ENCODE measurements at regions of chr11 and their contacts with region 1.

Region 1: DNA sequence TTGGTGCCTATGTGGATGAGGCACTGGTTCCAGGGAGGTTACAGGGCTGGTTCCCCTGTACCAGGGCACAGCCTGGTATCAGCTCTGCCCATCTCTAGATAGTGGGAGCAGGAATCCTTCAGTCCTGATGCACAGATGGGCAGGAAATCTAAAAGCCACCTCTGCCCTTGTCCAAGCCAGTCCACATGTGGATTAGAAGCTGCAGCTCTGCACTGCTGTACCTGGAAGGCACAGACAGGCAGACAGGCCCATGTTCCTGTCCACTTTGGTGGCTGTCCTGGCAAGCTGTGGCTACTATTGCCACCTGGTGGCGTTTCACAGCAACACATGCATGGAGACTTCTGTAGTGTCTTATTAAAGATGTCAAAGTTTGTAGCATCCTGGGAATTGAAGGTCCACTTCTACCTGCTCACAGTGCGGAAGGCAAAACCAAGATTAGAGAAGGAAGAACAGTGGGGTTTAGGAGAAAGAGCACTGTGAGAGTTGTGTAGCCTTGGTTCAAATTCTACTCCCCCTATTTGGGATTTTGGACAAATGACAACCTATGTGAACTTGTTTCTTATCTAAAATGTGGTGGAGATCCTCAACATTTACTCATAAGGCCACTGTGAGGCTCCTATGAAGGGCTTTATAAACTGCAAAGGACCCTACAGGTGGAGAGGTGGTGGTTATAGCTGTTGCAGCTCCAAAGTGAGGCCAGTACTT is 30.1 kb downstream of the NAV2 start:
- DNase-seq: peak; percentile 53 to 83 (median 77)
- ATAC-seq: peak; percentile 95
- H3K4me3 ChIP-seq: no peak overlapping the region
- H3K27ac ChIP-seq: no peak overlapping the region
- H3K4me1 ChIP-seq: peaks cover 0 to 6% of the 10 kb centered on the region in 2 donors
- H3K27me3 ChIP-seq: no peaks in the 10 kb centered on the region
- CTCF ChIP-seq: peak; percentile 82 to 92

Region 2: GRCh38 chr11:19573666-19574065 is 169.1 kb before region 1 on chr11:
- intact Hi-C with region 1: loop called in 1 of 2 experiments (anchors 5 kb)
- DNase-seq: no peak
- ATAC-seq: peak; percentile 20
- H3K4me3 ChIP-seq: no peak overlapping the region
- H3K27ac ChIP-seq: no peak overlapping the region
- H3K4me1 ChIP-seq: peaks cover 19 to 23% of the 10 kb centered on the region in 2 donors
- H3K27me3 ChIP-seq: no peaks in the 10 kb centered on the region
- CTCF ChIP-seq: no peak

Region 3: DNA sequence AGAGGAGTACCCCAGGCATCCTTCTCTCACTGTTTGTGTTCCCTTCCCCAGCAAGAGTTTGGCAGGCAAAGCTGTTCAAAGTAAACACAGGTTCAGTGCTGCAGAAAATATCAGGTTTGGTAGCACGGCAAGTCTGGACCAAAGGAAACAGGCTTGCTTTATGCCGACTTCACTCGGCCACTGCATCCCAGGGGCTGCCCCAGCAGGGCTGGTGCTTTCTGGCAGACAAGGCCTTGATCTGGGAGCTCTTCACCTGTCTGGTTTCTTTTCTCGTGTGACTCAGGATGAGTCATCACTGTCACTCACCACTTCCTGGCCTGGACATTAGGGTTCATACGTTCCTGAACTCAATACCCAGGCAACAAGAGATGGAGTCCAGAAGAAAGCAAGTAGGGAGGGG is 82.7 kb before region 1 on chr11:
- intact Hi-C with region 1: no loop called
- DNase-seq: no peak
- ATAC-seq: peak; percentile 63
- H3K4me3 ChIP-seq: no peak overlapping the region
- H3K27ac ChIP-seq: no peak overlapping the region
- H3K4me1 ChIP-seq: peaks cover 6 to 7% of the 10 kb centered on the region in 2 donors
- H3K27me3 ChIP-seq: no peaks in the 10 kb centered on the region
- CTCF ChIP-seq: no peak

Measured in left lung (tissue), 14 donors.